Posterior cingulate gyrus (tissue), 11 donors: ENCODE measurements at regions of chr5 and their contacts with region 1.

Region 1: DNA sequence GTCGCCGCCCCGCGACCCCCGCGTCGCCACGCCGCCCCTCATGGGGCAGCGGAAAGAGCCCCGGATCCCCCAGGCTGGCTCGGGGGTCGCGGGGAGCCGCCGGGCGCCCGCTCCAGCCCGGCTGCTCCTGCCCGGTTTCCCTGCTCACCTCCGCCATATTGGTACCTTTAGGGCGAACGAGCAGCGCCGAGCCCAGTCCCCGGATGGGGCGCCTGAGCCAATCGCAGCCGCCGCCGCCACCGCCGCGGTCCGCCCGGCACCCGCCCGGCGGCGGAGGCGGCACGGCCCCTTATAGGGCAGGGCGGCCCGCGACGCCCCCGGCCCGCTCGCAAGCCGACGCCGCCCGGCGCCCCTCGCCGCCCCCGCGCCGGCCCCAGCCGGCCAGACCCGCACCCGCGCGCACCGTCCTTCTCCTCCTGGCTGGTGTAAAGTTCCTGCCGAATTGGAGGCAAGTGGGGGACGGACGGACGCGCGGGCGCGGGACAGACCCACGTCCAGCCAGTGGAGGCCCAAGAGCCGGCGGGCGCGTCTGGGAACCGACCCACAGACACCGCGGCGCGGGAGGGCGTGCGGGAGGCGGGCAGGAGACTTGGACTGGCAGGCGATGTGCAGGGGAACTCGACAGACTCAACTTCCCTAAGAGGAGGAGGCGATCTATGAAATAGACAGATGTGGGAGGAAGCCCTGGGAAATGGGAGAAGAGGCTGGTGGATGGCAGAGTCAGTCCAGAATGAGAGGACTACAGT is at the start of gene MIER3:
- DNase-seq: peak; percentile 66 to 96 (median 78)

Region 2: DNA sequence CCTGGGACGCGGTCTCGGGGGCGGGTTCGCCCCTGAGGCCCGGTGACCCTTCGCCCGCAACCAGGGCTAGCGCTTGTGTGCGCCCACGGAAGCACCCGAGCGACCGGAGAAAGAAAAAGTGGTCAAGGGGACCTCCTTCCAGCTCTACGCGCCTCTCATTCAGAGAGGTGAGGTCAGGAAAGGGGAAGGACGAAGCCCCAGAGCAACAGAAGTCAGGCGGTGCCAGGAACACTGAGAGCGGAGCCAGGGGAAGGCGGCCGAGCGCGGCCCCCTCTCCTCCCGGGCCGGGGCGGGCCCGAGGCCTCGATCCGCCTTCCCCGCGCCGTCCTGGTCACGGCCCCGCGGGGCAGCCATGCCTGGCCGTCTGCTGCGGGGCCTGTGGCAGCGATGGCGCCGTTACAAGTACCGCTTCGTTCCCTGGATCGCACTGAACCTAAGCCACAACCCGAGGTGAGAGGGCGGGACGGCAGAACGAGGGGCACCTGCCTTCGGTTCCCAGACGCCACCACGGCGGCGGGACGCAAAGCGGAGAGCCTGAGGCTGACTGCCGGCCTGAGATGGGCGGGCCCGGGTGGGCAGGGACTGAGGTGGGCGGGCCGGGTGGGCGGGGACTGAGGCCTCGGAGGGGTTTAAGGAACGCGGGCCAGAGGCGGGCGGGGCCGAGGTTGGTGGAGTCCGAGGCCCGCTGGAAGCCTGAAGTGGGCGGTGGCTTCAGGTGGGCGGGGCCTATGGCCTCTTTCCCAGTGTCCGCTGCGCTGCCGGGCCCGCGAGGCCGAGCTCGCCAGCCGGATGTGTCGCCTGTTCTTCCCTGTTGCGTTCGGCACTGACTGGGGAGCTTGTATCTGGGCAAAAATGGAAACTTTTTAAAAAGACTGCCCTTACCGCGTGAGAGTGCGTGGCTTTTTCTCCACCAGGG is 42.6 kb before region 1 on chr5 and contains the start of gene SETD9:
- intact Hi-C with region 1: loop called (anchors 2 kb)
- DNase-seq: peak; percentile 91 to 99 (median 96)